MCF 10A (cell line): ENCODE measurements at regions of chr2 and their contacts with region 1.

Region 1: DNA sequence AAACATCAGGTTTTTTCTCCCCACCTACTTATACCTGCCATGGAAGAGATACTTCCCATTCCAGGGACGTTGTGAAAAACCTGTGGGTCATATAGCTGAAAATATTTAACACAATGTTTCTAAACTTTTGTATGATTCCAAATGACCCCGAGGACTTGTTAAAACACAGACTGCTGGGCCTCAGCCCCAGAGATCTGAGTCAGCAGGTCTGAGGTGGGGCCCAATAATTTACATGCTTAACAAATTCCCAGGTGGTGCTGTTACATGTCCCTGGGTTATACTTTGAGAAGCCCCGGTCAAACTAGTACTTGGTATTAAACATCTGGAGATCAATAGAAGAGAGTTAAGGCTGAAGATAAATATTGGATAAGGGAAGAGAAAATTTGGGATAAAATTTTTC is 71.4 kb upstream of the FRZB start:
- DNase-seq: no peak
- H3K4me3 Mint-ChIP-seq: no peak overlapping the region
- H3K27ac Mint-ChIP-seq: no peak overlapping the region
- H3K4me1 Mint-ChIP-seq: peaks cover 22% of the 10 kb centered on the region
- H3K27me3 Mint-ChIP-seq: no peaks in the 10 kb centered on the region
- CTCF ChIP-seq: no peak

Region 2: DNA sequence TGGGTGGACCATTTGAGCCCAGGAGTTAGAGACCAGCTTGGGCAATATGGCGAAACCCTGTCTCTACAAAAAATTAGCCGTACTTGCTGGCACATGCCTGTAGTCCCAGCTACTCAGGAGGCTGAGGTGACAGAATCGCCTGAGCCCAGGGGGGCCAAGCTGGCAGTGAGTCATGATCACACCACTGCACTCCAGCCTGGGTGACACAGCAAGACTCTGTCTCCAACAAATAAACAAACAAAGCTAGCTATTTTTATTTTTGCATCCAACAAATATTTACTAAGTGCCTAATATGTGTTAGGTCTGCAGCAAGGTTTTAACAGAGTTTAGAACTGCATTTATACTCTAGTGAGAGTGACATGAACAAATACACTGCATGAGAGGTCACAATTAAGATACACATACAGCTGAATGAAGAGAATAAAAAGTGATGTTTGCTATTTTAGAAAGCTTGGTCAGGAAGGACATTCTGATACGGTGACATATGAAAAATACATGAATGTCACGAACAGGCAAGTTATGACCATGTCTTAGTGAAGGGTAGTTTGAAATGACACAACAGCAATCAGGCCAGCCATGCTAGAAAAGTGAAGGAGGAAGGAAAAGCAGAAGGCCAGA is 11.8 kb after region 1 on chr2:
- CTCF ChIA-PET with region 1: interaction called, 3 read pairs
- POLR2A ChIA-PET with region 1: interaction called, 14 read pairs
- intact Hi-C with region 1: no loop called
- DNase-seq: peak; percentile 80
- H3K4me3 Mint-ChIP-seq: no peak overlapping the region
- H3K27ac Mint-ChIP-seq: peak overlapping the region; percentile 35
- H3K4me1 Mint-ChIP-seq: peaks cover 19% of the 10 kb centered on the region
- H3K27me3 Mint-ChIP-seq: no peaks in the 10 kb centered on the region
- CTCF ChIP-seq: no peak

Region 3: DNA sequence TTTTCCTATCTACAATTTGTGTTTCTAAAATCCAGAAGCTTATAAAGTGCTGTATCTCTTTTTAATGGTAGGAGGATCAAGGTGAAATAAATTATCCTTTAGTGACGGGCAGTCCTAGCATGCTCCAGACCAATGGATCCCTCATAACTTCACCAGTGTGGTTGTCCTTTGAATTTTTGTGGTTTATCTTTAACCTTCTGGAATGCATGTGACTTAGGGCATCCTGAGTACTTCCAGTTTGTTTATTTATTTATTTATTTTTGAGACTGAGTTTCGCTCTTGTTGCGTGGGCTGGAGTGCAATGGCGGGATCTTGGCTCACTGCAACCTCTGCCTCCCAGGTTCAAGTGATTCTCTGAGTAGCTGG is 226.8 kb after region 1 on chr2:
- CTCF ChIA-PET with region 1: no interaction called
- POLR2A ChIA-PET with region 1: no interaction called
- intact Hi-C with region 1: no loop called
- DNase-seq: no peak
- H3K4me3 Mint-ChIP-seq: no peak overlapping the region
- H3K27ac Mint-ChIP-seq: no peak overlapping the region
- H3K4me1 Mint-ChIP-seq: peaks cover 12% of the 10 kb centered on the region
- H3K27me3 Mint-ChIP-seq: no peaks in the 10 kb centered on the region
- CTCF ChIP-seq: no peak

Region 4: DNA sequence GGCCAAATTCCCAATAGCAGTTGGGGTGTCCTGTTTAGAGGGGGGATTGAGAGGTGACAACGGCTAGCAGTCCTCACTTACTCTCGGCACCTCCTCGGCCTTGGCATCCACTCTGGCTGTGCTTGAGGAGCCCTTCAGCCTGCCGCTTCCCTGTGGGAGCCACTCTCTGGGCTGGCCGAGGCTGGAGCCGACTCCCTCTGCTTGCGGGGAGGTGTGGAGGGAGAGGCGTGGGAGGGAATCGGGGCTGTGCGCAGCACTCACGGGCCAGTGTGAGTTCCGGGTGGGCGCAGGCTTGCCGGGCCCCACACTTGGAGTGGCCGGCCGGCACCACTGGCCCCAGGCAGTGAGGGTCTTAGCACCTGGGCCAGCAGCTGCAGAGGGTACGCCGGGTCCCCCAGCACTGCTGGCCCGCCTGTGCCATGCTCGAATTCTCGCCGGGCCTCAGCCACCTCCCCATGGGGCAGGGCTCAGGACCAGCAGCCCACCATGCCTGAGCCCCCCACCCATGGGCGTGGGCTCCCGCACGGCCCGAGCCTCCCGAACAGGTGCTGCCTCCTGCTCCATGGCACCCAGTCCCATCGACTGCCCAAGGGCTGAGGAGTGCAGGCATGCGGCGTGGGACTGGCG is 954.6 kb after region 1 on chr2:
- CTCF ChIA-PET with region 1: no interaction called
- POLR2A ChIA-PET with region 1: no interaction called
- intact Hi-C with region 1: no loop called
- DNase-seq: no peak
- H3K4me3 Mint-ChIP-seq: no peak overlapping the region
- H3K27ac Mint-ChIP-seq: no peak overlapping the region
- H3K4me1 Mint-ChIP-seq: no peaks in the 10 kb centered on the region
- H3K27me3 Mint-ChIP-seq: no peaks in the 10 kb centered on the region
- CTCF ChIP-seq: no peak